A673 (cell line): ENCODE measurements at regions of chr16 and their contacts with region 1.

Region 1: DNA sequence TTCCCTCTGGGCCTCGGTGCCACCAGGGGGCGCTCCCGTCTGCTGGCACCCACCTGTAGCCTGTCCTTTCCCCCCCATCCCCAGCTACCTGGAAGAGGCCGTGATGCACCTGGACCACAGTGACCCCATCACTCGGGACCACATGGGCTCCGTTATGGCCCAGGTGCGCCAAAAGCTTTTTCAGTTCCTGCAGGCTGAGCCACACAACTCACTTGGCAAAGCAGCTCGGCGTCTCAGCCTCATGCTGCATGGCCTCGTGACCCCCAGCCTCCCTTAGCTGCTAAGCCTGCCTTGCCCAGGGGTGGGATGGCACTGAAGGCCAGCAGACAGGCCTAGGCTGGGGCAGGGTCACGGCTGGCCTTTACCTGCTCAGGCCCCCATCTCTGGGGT is 818 bp upstream of the NRN1L start:
- DNase-seq: peak; percentile 57
- H3K4me3 ChIP-seq: no peak overlapping the region
- H3K27ac ChIP-seq: no peak overlapping the region
- H3K4me1 ChIP-seq: peaks cover 11% of the 10 kb centered on the region
- H3K27me3 ChIP-seq: no peaks in the 10 kb centered on the region
- CTCF ChIP-seq: peak; percentile 93

Region 2: DNA sequence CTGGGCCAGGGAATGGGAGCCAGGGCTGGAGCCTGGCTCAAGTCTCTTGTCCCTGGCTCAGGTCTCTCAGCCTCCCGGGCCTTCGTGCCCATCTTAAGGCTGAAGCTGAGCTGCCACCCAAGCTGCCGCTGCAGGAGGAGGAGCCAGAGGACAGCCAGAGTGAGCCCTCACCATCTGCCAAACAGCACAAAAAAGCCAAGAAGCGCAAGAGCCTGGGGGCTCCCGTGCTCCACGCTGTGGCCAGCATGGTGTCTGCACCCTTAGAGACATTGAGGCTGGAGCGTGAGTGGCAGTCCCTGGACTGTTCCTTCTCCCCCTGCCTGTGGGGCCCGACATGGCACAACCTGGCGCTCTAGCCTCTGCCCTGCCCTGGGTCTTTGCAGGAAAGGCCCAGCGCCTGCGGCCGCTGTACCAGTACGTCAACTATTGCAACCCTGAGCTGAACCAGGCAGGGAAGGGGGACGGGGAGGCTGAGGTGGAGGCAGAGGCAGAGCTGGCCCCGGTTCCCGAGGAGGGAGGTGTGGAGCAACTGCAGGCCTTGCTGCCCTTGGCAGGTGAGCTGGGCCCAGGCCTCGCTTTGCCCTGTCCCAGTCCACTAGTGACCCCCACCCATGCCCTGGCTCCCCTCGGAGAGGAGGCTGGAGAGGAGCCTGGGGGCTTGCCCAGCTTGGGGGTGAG is 215.9 kb before region 1 on chr16:
- CTCF ChIA-PET with region 1: no interaction called
- POLR2A ChIA-PET with region 1: no interaction called
- intact Hi-C with region 1: no loop called
- DNase-seq: peak; percentile 96
- H3K4me3 ChIP-seq: no peak overlapping the region
- H3K27ac ChIP-seq: no peak overlapping the region
- H3K4me1 ChIP-seq: peaks cover 12% of the 10 kb centered on the region
- H3K27me3 ChIP-seq: no peaks in the 10 kb centered on the region
- CTCF ChIP-seq: peak; percentile 85

Region 3: DNA sequence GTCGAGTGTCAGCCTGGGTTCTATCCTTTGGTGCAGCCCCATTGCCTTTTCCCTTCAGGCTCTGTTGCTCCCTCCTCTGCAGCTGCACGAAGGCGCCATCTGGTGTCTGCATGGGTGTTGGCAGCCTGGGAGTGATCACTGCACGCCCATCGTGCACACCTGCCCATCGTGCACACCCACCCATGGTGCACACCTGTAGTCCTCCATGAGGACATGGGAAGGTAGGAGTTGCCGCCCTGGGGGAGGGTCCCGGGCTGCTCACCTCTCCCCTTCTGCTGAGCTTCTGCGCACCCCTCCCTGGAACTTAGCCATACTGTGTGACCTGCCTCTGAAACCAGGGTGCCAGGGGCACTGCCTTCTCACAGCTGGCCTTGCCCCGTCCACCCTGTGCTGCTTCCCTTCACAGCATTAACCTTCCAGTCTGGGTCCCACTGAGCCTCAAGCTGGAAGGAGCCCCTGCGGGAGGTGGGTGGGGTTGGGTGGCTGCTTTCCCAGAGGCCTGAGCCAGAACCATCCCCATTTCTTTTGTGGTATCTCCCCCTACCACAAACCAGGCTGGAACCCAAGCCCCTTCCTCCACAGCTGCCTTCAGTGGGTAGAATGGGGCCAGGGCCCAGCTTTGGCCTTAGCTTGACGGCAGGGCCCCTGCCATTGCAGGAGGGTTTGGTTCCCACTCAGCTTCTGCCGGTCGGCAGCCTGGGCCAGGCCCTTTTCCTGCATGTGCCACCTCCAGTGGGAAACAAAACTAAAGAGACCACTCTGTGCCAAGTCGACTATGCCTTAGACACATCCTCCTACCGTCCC is 44.9 kb after region 1 on chr16:
- CTCF ChIA-PET with region 1: interaction called, 15 read pairs
- POLR2A ChIA-PET with region 1: no interaction called
- intact Hi-C with region 1: loop called (anchors 1 kb)
- DNase-seq: peak; percentile 81
- H3K4me3 ChIP-seq: no peak overlapping the region
- H3K27ac ChIP-seq: no peak overlapping the region
- H3K4me1 ChIP-seq: peaks cover 22% of the 10 kb centered on the region
- H3K27me3 ChIP-seq: no peaks in the 10 kb centered on the region
- CTCF ChIP-seq: peak; percentile 94